ENCODE measurements at regions of chr15 and their contacts with region 1.

Region 1: DNA sequence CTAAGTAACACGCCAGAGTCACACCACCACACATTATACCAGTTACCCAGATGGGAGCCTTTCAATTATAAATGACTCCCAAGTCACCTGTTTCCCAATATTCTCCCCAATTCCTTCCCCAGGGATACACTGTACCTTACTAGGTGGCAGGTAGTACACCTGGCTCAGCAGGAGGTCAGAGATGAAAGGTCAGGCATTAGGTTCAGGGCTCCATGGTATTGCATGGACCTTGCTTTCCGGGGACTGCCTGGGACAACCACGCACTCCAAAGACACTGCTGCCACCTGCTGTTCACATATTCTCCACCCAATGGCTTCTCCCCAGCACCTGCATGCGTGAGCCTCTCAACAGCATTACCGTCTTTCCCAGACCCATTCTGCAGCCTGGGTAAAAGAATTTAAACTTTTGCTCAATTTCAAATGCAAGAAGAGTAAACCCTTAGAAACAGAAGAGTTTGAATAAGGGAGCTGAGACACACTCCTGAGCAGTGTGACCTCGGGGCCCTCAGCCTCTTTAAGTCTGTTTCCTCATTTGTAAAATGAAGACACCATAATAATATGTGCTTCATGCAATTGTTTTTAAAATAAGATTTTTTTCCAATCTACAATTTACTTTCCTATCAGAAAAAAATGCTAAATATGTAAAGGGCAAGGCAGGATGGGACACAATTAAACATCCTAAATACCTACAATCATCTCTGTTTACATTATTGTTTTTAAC is 28.0 kb upstream of the LACTB start:
- DNase-seq: peak; percentile 84 to 94
- H3K4me3 ChIP-seq: no peak overlapping the region
- H3K27ac ChIP-seq: peak overlapping the region in 1 of 5 donors; percentile 14
- H3K4me1 ChIP-seq: peaks cover 0 to 26% (median 9%) of the 10 kb centered on the region in 4 donors
- H3K27me3 ChIP-seq: no peaks in the 10 kb centered on the region
- CTCF ChIP-seq: peak in 5 of 7 experiments; percentile 75 to 91 (median 82)
- EP300 ChIP-seq: no peak
- POLR2A ChIP-seq: no peak

Region 2: DNA sequence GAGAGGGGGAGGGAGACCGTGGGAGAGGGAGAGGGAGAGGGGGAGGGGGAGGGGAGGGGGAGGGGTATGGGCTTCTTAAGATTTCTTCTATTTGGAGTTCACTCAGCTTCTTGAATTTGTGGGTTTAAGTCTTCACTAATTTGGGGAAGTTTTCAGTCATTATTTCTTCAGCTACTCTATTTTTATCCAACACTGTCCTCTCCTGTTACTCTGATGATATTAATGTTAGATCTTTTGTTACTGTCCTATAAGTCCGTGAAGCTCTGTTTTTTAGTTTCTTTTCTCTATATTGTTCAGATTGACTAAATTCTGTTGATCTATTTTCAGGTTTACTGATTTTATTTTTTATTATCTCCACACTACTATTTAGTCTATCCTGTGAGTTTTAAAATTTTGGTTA is 402.6 kb before region 1 on chr15:
- intact Hi-C with region 1: no loop called
- DNase-seq: no peak
- H3K4me3 ChIP-seq: no peak overlapping the region
- H3K27ac ChIP-seq: no peak overlapping the region
- H3K4me1 ChIP-seq: no peaks in the 10 kb centered on the region
- H3K27me3 ChIP-seq: no peaks in the 10 kb centered on the region
- CTCF ChIP-seq: no peak
- EP300 ChIP-seq: no peak
- POLR2A ChIP-seq: no peak

Region 3: GRCh38 chr15:62770752-62771151 is 322.9 kb before region 1 on chr15:
- intact Hi-C with region 1: loop called (anchors 10 kb)
- DNase-seq: no peak
- H3K4me3 ChIP-seq: no peak overlapping the region
- H3K27ac ChIP-seq: no peak overlapping the region
- H3K4me1 ChIP-seq: peaks cover 0 to 8% (median 2%) of the 10 kb centered on the region in 4 donors
- H3K27me3 ChIP-seq: no peaks in the 10 kb centered on the region
- CTCF ChIP-seq: no peak
- EP300 ChIP-seq: no peak
- POLR2A ChIP-seq: no peak

Region 4: GRCh38 chr15:62958528-62959363 is 134.9 kb before region 1 on chr15:
- intact Hi-C with region 1: no loop called
- DNase-seq: peak in 1 of 2 donors; percentile 63
- H3K4me3 ChIP-seq: no peak overlapping the region
- H3K27ac ChIP-seq: peak overlapping the region in 2 of 5 donors; percentile 25 to 32
- H3K4me1 ChIP-seq: peaks cover 0 to 16% (median 5%) of the 10 kb centered on the region in 4 donors
- H3K27me3 ChIP-seq: no peaks in the 10 kb centered on the region
- CTCF ChIP-seq: no peak
- EP300 ChIP-seq: no peak
- POLR2A ChIP-seq: no peak

Region 5: GRCh38 chr15:63048115-63048775 is 45.4 kb before region 1 on chr15:
- intact Hi-C with region 1: loop called (anchors 10 kb)
- DNase-seq: peak; percentile 93 to 98
- H3K4me3 ChIP-seq: peak overlapping the region; percentile 64 to 83 (median 80)
- H3K27ac ChIP-seq: peak overlapping the region; percentile 90 to 100 (median 92)
- H3K4me1 ChIP-seq: peaks cover 32 to 73% (median 63%) of the 10 kb centered on the region in 4 donors
- H3K27me3 ChIP-seq: peaks cover 0 to 23% (median 13%) of the 10 kb centered on the region in 3 donors
- CTCF ChIP-seq: peak in 5 of 7 experiments; percentile 81 to 95 (median 93)
- EP300 ChIP-seq: no peak
- POLR2A ChIP-seq: no peak

Measured in stomach (tissue), 19 donors.